HepG2 (cell line): ENCODE measurements at regions of chr4 and their contacts with region 1.

Region 1: GRCh38 chr4:17614416-17615299 is at the start of gene MED28:
- DNase-seq: peak; percentile 93
- ATAC-seq: peak; percentile 84
- H3K4me3 ChIP-seq: peak within 1 kb of the TSS; percentile 92 to 98 (median 93)
- H3K27ac ChIP-seq: peak within 1 kb of the TSS; percentile 82
- H3K4me1 ChIP-seq: peaks cover 39% of the 10 kb centered on the region
- H3K27me3 ChIP-seq: no peaks in the 10 kb centered on the region; a peak in 1 of 5 replicates
- CTCF ChIP-seq: peak; percentile 25
- EP300 ChIP-seq: no peak
- POLR2A ChIP-seq: peak; percentile 80 to 84; a peak in 3 of 4 replicates
- RAD21 ChIP-seq: no peak
- total RNA-seq, gene MED28: 65.7 and 96.5 TPM in 2 replicates

Region 2: DNA sequence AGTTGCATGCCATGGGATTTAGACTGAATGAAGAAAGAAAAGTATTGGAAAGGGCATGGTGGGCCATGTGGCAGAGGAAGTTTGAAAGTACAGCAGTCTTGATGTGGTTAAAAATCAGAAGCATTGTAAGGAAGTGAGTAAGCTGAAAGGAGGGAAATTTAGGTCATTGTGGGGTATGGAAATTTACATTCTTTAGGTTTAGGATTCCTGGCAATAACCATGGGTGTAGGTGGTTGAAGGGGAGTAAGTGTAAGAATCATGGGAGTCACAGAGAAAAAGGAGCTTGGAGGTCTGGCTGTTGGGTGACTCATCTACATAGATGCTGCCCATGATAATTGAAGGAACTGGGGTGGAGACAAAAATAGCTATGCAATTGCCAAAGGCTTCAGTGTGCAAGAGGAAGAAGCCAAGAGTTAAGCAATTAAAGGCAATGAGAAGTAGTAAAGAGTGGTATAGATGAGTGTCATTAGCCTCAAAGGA is 472.4 kb before region 1 on chr4:
- CTCF ChIA-PET with region 1: no interaction called
- POLR2A ChIA-PET with region 1: no interaction called
- in situ Hi-C with region 1: no loop called
- intact Hi-C with region 1: no loop called
- DNase-seq: no peak
- ATAC-seq: no peak
- H3K4me3 ChIP-seq: no peak overlapping the region
- H3K27ac ChIP-seq: no peak overlapping the region
- H3K4me1 ChIP-seq: no peaks in the 10 kb centered on the region
- H3K27me3 ChIP-seq: no peaks in the 10 kb centered on the region
- CTCF ChIP-seq: no peak
- EP300 ChIP-seq: no peak
- POLR2A ChIP-seq: no peak
- RAD21 ChIP-seq: no peak

Region 3: GRCh38 chr4:17576932-17577665 is 37.6 kb before region 1 on chr4 and contains the start of gene LAP3:
- CTCF ChIA-PET with region 1: no interaction called
- POLR2A ChIA-PET with region 1: interaction called, 14 read pairs
- in situ Hi-C with region 1: no loop called
- intact Hi-C with region 1: loop called (anchors 2 kb)
- DNase-seq: peak; percentile 90
- ATAC-seq: peak; percentile 94
- H3K4me3 ChIP-seq: peak within 1 kb of the TSS; percentile 87 to 91 (median 91)
- H3K27ac ChIP-seq: peak within 1 kb of the TSS; percentile 75
- H3K4me1 ChIP-seq: peaks cover 63% of the 10 kb centered on the region
- H3K27me3 ChIP-seq: no peaks in the 10 kb centered on the region; a peak in 1 of 5 replicates
- CTCF ChIP-seq: peak; percentile 18; the same call in 1 of the 2 replicates
- EP300 ChIP-seq: no peak
- POLR2A ChIP-seq: peak; percentile 89 to 92
- RAD21 ChIP-seq: peak; percentile 43
- total RNA-seq, gene LAP3: 125 and 177 TPM in 2 replicates

Region 4: DNA sequence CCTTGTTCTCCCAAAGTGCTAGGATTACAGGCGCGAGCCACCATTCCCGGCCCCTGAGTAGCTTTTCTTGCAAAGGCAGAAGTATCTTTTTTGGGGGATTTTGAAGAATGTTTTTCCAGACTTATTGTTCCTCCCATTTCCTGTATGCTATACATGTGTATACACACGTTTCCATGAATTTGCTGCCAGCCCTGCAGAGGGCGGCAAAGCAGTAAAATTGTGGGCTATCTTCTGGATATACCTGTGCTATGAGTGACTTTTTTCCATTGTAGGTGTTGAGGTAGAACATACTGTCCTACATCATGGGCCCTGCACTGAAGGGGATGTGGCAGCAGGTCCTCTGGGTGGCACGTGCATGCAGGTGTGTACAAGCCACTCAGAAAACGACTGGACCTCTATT is 17.1 kb before region 1 on chr4:
- CTCF ChIA-PET with region 1: no interaction called
- POLR2A ChIA-PET with region 1: no interaction called
- in situ Hi-C with region 1: no loop called
- intact Hi-C with region 1: loop called (anchors 1 kb)
- DNase-seq: no peak
- ATAC-seq: peak; percentile 92
- H3K4me3 ChIP-seq: no peak overlapping the region
- H3K27ac ChIP-seq: no peak overlapping the region
- H3K4me1 ChIP-seq: no peaks in the 10 kb centered on the region
- H3K27me3 ChIP-seq: no peaks in the 10 kb centered on the region
- CTCF ChIP-seq: peak; percentile 57
- EP300 ChIP-seq: no peak
- POLR2A ChIP-seq: no peak
- RAD21 ChIP-seq: peak; percentile 29; the same call in 1 of the 2 replicates